ENCODE measurements at regions of chr14 and their contacts with region 1.

Region 1: DNA sequence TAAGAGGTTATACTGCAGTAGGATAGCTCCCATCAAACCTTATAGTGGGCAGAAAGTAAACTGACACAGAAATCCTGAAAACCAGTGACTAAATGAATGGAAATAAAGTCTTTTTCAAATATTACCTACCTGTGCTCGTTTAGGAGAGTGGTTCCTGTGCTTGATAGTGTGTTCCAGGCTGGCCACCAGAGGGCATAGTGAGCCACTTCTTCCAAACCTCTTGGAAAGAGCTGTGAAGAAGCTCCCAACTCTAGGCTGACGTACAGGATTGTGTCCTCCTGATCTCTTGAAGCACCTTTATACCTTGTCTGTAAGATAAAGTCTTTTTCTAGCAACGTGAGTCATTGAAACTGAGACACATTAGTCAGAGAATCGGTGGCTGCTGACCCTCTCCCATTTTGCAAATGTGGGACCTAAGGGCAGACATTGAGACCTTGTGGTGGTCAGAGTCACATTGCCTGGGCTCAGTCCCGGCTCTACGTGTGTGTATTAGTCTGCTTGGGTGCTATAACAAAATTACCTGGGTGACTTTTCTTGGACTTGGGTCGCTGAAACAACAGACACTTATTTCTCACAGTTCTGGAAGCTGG is 17.6 kb downstream of the TDP1 start:
- DNase-seq: peak; percentile 69 to 80
- ATAC-seq: peak; percentile 83
- H3K4me3 ChIP-seq: no peak overlapping the region
- H3K27ac ChIP-seq: no peak overlapping the region
- H3K4me1 ChIP-seq: no peaks in the 10 kb centered on the region
- H3K27me3 ChIP-seq: no peaks in the 10 kb centered on the region

Region 2: GRCh38 chr14:89881839-89882238 is 91.5 kb before region 1 on chr14:
- intact Hi-C with region 1: no loop called
- DNase-seq: no peak
- ATAC-seq: no peak
- H3K4me3 ChIP-seq: no peak overlapping the region
- H3K27ac ChIP-seq: no peak overlapping the region
- H3K4me1 ChIP-seq: no peaks in the 10 kb centered on the region
- H3K27me3 ChIP-seq: no peaks in the 10 kb centered on the region

Region 3: GRCh38 chr14:90235179-90235976 is 262.0 kb after region 1 on chr14:
- intact Hi-C with region 1: loop called in 1 of 2 experiments (anchors 10 kb)
- DNase-seq: peak; percentile 63 to 85
- ATAC-seq: peak; percentile 68
- H3K4me3 ChIP-seq: no peak overlapping the region
- H3K27ac ChIP-seq: no peak overlapping the region
- H3K4me1 ChIP-seq: no peaks in the 10 kb centered on the region
- H3K27me3 ChIP-seq: no peaks in the 10 kb centered on the region

Measured in aorta (tissue), 5 donors.